Motor neuron (in vitro differentiated cells): ENCODE measurements at regions of chr10 and their contacts with region 1.

Region 1: GRCh38 chr10:123132576-123133477 is 2.9 kb upstream of the HMX3 start:
- ATAC-seq: peak; percentile 72 to 85 (median 81)
- H3K4me3 ChIP-seq: peak overlapping the region; percentile 4 to 24 (median 18)
- H3K27ac ChIP-seq: no peak overlapping the region
- H3K4me1 ChIP-seq: peaks cover 0 to 22% of the 10 kb centered on the region in 2 donors

Region 2: DNA sequence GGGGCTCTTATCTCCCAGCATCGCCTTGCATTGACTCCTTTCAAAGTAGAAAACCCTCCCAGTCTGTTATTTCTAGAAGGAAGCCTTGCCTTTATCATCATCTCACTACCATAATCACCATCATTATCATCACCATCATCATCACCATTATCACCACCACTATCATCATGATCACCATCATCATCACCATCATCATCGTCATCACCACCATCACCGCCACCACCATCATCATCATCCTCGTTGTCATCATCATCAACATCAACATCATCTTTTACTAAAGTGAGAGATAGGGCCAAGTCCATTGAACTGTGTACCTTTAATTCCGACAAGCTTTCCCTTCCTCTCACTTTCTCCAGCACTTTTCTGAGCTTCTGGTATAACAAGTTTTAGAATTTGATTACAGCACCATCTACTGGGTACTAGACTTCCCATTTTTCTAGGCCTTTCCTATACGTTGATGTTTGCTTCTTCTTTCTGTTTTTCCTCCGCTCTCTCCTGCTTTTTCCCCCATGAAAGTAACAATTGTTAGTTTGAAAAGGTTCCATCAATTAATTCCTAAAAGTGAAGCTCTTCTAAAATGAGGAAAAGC is 247.8 kb after region 1 on chr10:
- in situ Hi-C with region 1: loop called in 4 of 9 experiments (anchors 25 kb)
- ATAC-seq: peak in 3 of 8 experiments; percentile 35 to 47 (median 36)
- H3K4me3 ChIP-seq: no peak overlapping the region
- H3K27ac ChIP-seq: no peak overlapping the region
- H3K4me1 ChIP-seq: peaks cover 0 to 6% of the 10 kb centered on the region in 2 donors

Region 3: GRCh38 chr10:123512901-123513775 is 380.3 kb after region 1 on chr10:
- in situ Hi-C with region 1: no loop called
- ATAC-seq: peak in 5 of 8 experiments; percentile 52 to 87 (median 79)
- H3K4me3 ChIP-seq: no peak overlapping the region
- H3K27ac ChIP-seq: no peak overlapping the region
- H3K4me1 ChIP-seq: peaks cover 22 to 28% of the 10 kb centered on the region in 2 donors

Region 4: GRCh38 chr10:123559066-123559822 is 426.4 kb after region 1 on chr10:
- in situ Hi-C with region 1: loop called (anchors 10 to 25 kb)
- ATAC-seq: peak; percentile 89 to 98 (median 92)
- H3K4me3 ChIP-seq: no peak overlapping the region
- H3K27ac ChIP-seq: no peak overlapping the region
- H3K4me1 ChIP-seq: no peaks in the 10 kb centered on the region